ENCODE measurements at regions of chr6 and their contacts with region 1.

Region 1: GRCh38 chr6:45661661-45662060 is 283.9 kb upstream of the SUPT3H start:
- DNase-seq: no peak
- ATAC-seq: no peak
- H3K4me3 Mint-ChIP-seq: no peak overlapping the region
- H3K27ac Mint-ChIP-seq: no peak overlapping the region
- H3K4me1 Mint-ChIP-seq: peaks cover 45% of the 10 kb centered on the region
- H3K27me3 Mint-ChIP-seq: peaks cover 22% of the 10 kb centered on the region

Region 2: GRCh38 chr6:45626087-45626891 is 35.4 kb before region 1 on chr6:
- CTCF ChIA-PET with region 1: no interaction called
- POLR2A ChIA-PET with region 1: no interaction called
- intact Hi-C with region 1: loop called in 1 of 2 experiments (anchors 1 kb)
- DNase-seq: peak; percentile 42
- ATAC-seq: peak; percentile 57
- H3K4me3 Mint-ChIP-seq: no peak overlapping the region
- H3K27ac Mint-ChIP-seq: peak overlapping the region; percentile 76
- H3K4me1 Mint-ChIP-seq: peaks cover 45% of the 10 kb centered on the region
- H3K27me3 Mint-ChIP-seq: no peaks in the 10 kb centered on the region

Region 3: GRCh38 chr6:45724511-45724910 is 62.9 kb after region 1 on chr6:
- CTCF ChIA-PET with region 1: no interaction called
- POLR2A ChIA-PET with region 1: no interaction called
- intact Hi-C with region 1: no loop called
- DNase-seq: no peak
- ATAC-seq: no peak
- H3K4me3 Mint-ChIP-seq: no peak overlapping the region
- H3K27ac Mint-ChIP-seq: no peak overlapping the region
- H3K4me1 Mint-ChIP-seq: no peaks in the 10 kb centered on the region
- H3K27me3 Mint-ChIP-seq: peaks cover 2% of the 10 kb centered on the region